SK-N-SH (cell line): ENCODE measurements at regions of chr3 and their contacts with region 1.

Region 1: GRCh38 chr3:52001443-52001974 is 5.8 kb upstream of the RPL29 start:
- DNase-seq: peak; percentile 92
- H3K4me3 ChIP-seq: peak overlapping the region in 1 of 2 experiments; percentile 36; a peak in 1 of 4 replicates
- H3K27ac ChIP-seq: peak overlapping the region in 1 of 2 experiments; percentile 61; a peak in 2 of 4 replicates
- H3K4me1 ChIP-seq: peaks cover 20 to 48% of the 10 kb centered on the region in 2 experiments
- H3K27me3 ChIP-seq: no peaks in the 10 kb centered on the region
- CTCF ChIP-seq: peak; percentile 97
- EP300 ChIP-seq: no peak
- RAD21 ChIP-seq: peak; percentile 96

Region 2: GRCh38 chr3:51982782-51983577 is 18.5 kb before region 1 on chr3 and contains the start of gene ACY1:
- CTCF ChIA-PET with region 1: interaction called, 13 read pairs
- POLR2A ChIA-PET with region 1: interaction called, 34 read pairs
- DNase-seq: peak; percentile 97
- H3K4me3 ChIP-seq: peak within 1 kb of the TSS; percentile 68 to 90
- H3K27ac ChIP-seq: peak within 1 kb of the TSS; percentile 89 to 93
- H3K4me1 ChIP-seq: peaks cover 5 to 19% of the 10 kb centered on the region in 2 experiments; a peak in 3 of 4 replicates
- H3K27me3 ChIP-seq: no peaks in the 10 kb centered on the region
- CTCF ChIP-seq: peak; percentile 4; the same call in 1 of the 2 replicates
- EP300 ChIP-seq: no peak
- RAD21 ChIP-seq: no peak
- polyA plus RNA-seq, gene ACY1: 93.0 and 96.2 TPM in 2 replicates

Region 3: DNA sequence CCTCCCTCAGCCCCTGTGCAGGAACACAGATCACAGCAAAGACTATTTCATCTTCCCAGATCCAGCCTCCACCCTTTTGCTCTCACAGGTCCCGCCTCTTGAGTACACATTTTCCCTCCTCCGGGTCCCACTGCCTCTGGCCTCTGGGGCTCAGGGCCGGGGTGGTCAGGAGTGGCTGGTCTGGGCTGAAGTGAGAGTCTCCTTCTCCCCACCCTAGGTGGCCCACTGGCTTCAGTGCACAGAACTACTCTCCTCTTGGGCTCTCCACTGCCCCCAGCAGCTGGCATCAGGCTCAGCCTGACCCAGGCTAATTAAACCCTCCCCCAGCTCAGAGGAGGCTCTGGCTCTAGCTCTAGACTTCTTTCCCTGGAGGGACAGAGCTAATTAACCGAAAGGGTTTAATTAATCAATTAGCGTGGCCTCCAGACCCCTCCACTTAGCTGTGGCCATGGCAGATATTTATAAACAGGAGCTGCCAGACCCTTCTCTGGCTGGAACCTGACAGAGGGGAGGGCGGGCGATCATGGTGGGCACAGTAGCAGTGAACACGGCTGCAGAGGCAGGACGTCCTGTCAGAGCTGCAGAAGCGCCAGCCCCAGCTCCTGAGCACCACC is 39.7 kb after region 1 on chr3:
- CTCF ChIA-PET with region 1: interaction called, 983 read pairs
- POLR2A ChIA-PET with region 1: interaction called, 60 read pairs
- DNase-seq: peak; percentile 93
- H3K4me3 ChIP-seq: no peak overlapping the region
- H3K27ac ChIP-seq: peak overlapping the region in 1 of 2 experiments; percentile 100; a peak in 2 of 4 replicates
- H3K4me1 ChIP-seq: peaks cover 18 to 87% of the 10 kb centered on the region in 2 experiments; a peak in 3 of 4 replicates
- H3K27me3 ChIP-seq: no peaks in the 10 kb centered on the region
- CTCF ChIP-seq: peak; percentile 52
- EP300 ChIP-seq: peak in 1 of 2 experiments; percentile 98; a peak in 2 of 4 replicates
- RAD21 ChIP-seq: peak; percentile 66

Region 4: DNA sequence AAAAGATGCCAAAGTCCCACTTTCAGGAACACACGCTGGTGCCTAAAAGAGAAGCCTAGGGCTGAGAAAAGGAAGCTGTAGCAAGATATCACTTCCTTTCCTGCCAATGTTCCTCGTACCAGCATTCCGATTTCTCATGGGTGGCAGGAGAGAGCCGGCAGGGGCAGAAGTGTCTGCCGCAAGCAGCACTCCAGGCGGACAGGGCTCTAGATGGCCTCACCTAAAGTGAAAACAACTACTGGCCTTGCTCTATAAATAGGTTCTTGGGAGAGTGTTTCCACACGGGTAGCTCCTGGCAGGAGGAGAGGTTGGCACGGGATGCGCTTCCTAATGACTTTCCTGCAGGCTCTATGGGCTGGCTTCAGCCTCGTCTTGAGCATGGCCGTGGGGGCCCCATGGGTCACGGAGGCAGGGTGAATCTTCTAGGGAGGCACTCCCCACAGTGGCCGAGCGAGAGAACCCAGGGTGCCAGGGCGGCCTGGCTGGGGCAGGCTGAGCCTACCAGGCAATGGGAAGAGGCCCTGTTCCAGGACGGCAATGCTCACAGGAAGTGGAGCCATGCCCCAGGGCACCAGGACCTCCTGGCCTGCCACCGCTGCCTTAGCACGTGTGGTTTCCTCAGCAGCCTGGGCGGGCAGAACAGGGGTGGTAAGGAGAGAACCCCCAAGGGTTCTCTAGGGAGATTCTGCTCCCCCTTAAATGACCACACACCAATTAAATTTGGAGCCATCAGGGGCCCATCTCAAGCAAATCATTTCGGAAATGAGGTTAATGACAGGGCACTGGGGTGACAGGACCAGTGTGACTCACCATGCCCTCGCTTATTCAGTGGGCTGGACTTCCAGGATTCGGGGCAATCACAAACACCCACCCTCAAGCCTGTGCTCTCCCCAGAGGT is 69.5 kb after region 1 on chr3:
- CTCF ChIA-PET with region 1: interaction called, 21 read pairs
- POLR2A ChIA-PET with region 1: interaction called, 3 read pairs
- DNase-seq: peak; percentile 50
- H3K4me3 ChIP-seq: no peak overlapping the region
- H3K27ac ChIP-seq: peak overlapping the region in 1 of 2 experiments; percentile 100; a peak in 2 of 4 replicates
- H3K4me1 ChIP-seq: peaks cover 0 to 60% of the 10 kb centered on the region in 2 experiments; a peak in 2 of 4 replicates
- H3K27me3 ChIP-seq: no peaks in the 10 kb centered on the region
- CTCF ChIP-seq: no peak
- EP300 ChIP-seq: no peak
- RAD21 ChIP-seq: no peak

Region 5: GRCh38 chr3:52123106-52123725 is 121.7 kb after region 1 on chr3:
- CTCF ChIA-PET with region 1: interaction called, 366 read pairs
- POLR2A ChIA-PET with region 1: interaction called, 15 read pairs
- DNase-seq: peak; percentile 87
- H3K4me3 ChIP-seq: no peak overlapping the region; a peak in 1 of 4 replicates
- H3K27ac ChIP-seq: peak overlapping the region in 1 of 2 experiments; percentile 83; a peak in 2 of 4 replicates
- H3K4me1 ChIP-seq: peaks cover 5 to 33% of the 10 kb centered on the region in 2 experiments; a peak in 2 of 4 replicates
- H3K27me3 ChIP-seq: no peaks in the 10 kb centered on the region
- CTCF ChIP-seq: peak; percentile 96
- EP300 ChIP-seq: no peak
- RAD21 ChIP-seq: peak; percentile 97

Region 6: GRCh38 chr3:52220380-52221026 is 219.0 kb after region 1 on chr3:
- CTCF ChIA-PET with region 1: interaction called, 57 read pairs
- POLR2A ChIA-PET with region 1: no interaction called
- DNase-seq: peak; percentile 93
- H3K4me3 ChIP-seq: peak overlapping the region in 1 of 2 experiments; percentile 38; a peak in 1 of 4 replicates
- H3K27ac ChIP-seq: no peak overlapping the region
- H3K4me1 ChIP-seq: peaks cover 12 to 19% of the 10 kb centered on the region in 2 experiments; a peak in 3 of 4 replicates
- H3K27me3 ChIP-seq: no peaks in the 10 kb centered on the region
- CTCF ChIP-seq: peak; percentile 88
- EP300 ChIP-seq: no peak
- RAD21 ChIP-seq: peak; percentile 81